PC-9 (cell line): ENCODE measurements at regions of chr12 and their contacts with region 1.

Region 1: GRCh38 chr12:56299853-56300643 is at the start of gene CS:
- DNase-seq: peak; percentile 93 to 97
- H3K4me3 ChIP-seq: peak within 1 kb of the TSS; percentile 88
- H3K27ac ChIP-seq: peak within 1 kb of the TSS; percentile 31
- H3K4me1 ChIP-seq: peaks cover 33% of the 10 kb centered on the region
- H3K27me3 ChIP-seq: no peaks in the 10 kb centered on the region
- CTCF ChIP-seq: no peak
- total RNA-seq, gene CS: 203 and 205 TPM in 2 replicates

Region 2: GRCh38 chr12:55862286-55862685 is 437.8 kb before region 1 on chr12:
- CTCF ChIA-PET with region 1: no interaction called
- POLR2A ChIA-PET with region 1: no interaction called
- intact Hi-C with region 1: no loop called
- DNase-seq: no peak
- H3K4me3 ChIP-seq: no peak overlapping the region
- H3K27ac ChIP-seq: no peak overlapping the region
- H3K4me1 ChIP-seq: no peaks in the 10 kb centered on the region
- H3K27me3 ChIP-seq: no peaks in the 10 kb centered on the region
- CTCF ChIP-seq: no peak

Region 3: DNA sequence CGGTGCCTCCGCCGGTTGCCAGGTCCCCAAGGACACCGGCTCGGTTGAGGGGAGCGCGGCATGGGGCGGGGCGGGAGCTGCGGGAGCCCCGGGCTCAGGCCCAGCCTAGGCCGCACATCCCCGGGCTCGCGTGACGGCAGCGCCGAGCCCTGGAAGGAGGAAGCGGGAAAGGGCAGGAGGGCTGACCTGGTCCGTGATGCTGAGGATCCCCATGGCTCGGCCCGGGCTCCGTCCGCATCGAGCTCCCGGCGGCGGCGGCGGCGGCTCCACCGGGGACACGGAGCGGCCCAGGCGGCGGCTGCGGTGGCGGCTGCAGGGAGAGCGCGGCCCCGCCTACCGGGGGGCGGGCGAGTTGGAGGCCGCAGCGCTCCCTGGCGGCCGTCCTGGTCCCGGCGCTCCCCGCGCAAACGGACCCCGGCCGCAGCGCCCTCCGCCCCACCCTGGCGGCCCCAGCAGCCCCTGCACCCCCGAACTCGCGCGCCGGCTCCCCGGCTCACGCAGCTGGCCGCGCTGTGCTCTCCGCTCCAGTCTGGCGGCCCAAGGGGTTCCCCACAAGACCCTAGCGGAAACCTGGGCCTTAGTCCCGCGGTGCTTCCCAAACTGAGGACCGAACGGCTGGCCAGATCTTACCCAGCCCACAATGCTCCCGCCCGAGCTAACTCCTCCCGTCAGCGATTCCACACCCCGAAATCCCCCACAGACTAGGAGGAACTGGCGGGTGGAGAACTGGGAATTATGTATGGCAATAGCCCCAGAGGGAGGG is 41.8 kb before region 1 on chr12 and contains the start of gene ANKRD52:
- CTCF ChIA-PET with region 1: no interaction called
- POLR2A ChIA-PET with region 1: no interaction called
- intact Hi-C with region 1: no loop called
- DNase-seq: peak; percentile 40 to 77
- H3K4me3 ChIP-seq: peak within 1 kb of the TSS; percentile 96
- H3K27ac ChIP-seq: no peak within 1 kb of the TSS
- H3K4me1 ChIP-seq: peaks cover 31% of the 10 kb centered on the region
- H3K27me3 ChIP-seq: no peaks in the 10 kb centered on the region
- CTCF ChIP-seq: peak; percentile 61
- total RNA-seq, gene ANKRD52: 59.4 and 62.8 TPM in 2 replicates

Region 4: GRCh38 chr12:56286044-56286830 is 13.8 kb before region 1 on chr12:
- CTCF ChIA-PET with region 1: interaction called, 3 read pairs
- POLR2A ChIA-PET with region 1: no interaction called
- intact Hi-C with region 1: loop called (anchors 1 kb)
- DNase-seq: no peak
- H3K4me3 ChIP-seq: no peak overlapping the region
- H3K27ac ChIP-seq: no peak overlapping the region
- H3K4me1 ChIP-seq: peaks cover 12% of the 10 kb centered on the region
- H3K27me3 ChIP-seq: no peaks in the 10 kb centered on the region
- CTCF ChIP-seq: no peak

Region 5: GRCh38 chr12:56315622-56316473 is 15.8 kb after region 1 on chr12 and contains the start of gene CNPY2:
- CTCF ChIA-PET with region 1: no interaction called
- POLR2A ChIA-PET with region 1: interaction called, 7 read pairs
- intact Hi-C with region 1: loop called (anchors 2 kb)
- DNase-seq: peak; percentile 95
- H3K4me3 ChIP-seq: peak within 1 kb of the TSS; percentile 83
- H3K27ac ChIP-seq: peak within 1 kb of the TSS; percentile 51
- H3K4me1 ChIP-seq: peaks cover 18% of the 10 kb centered on the region
- H3K27me3 ChIP-seq: no peaks in the 10 kb centered on the region
- CTCF ChIP-seq: no peak; the same call in 1 of the 2 replicates
- total RNA-seq, gene CNPY2: 78.2 and 82.1 TPM in 2 replicates

Region 6: DNA sequence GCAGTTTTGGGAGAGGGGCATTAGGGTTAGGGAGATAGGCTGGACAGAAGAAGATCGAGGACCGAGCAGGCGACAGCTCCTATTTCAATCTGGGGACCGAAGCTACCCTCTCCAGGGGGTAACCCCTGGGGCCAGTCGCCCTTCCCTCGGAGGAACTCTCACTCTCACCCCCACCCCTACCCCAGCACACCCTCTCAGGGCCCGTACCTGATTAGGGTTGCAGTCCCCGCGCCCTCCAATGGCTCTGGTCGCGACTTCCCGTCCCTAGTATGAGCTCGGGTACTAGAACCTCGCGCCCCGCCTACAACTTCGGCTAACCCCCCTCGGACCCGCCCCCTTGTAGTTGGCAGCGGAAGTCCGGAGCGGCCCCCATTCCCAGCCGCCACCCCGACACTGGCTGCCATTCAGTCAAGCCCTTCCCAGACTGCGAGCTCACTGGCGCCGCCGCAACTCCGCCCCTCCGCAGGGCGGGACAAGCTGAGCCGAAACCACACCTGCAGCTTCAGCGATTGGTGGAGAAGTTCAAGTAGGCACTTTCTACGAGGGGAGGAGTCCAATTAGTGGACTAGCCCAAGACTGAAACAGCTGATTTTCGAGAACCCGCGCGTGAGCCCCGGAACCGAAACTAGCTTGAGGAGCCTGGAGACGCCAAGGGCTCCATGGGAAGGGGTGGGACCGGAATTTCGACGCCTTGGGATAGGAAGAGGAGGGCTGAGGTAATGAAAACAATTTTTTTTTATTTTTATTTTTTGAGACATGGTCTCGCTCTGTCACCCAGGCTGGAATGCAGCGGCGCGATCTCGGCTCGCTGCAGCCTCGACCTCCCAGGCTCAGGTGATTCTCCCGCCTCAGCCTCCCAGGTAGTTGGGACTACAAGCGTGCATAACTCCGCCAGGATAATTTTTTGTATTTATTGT is 60.1 kb after region 1 on chr12 and contains the start of gene STAT2:
- CTCF ChIA-PET with region 1: interaction called, 5 read pairs
- POLR2A ChIA-PET with region 1: interaction called, 24 read pairs
- intact Hi-C with region 1: no loop called
- DNase-seq: peak; percentile 99
- H3K4me3 ChIP-seq: peak within 1 kb of the TSS; percentile 79
- H3K27ac ChIP-seq: peak within 1 kb of the TSS; percentile 85
- H3K4me1 ChIP-seq: peaks cover 17% of the 10 kb centered on the region
- H3K27me3 ChIP-seq: no peaks in the 10 kb centered on the region
- CTCF ChIP-seq: no peak
- total RNA-seq, gene STAT2: 76.6 and 80.8 TPM in 2 replicates

Region 7: GRCh38 chr12:56565510-56566101 is 265.6 kb after region 1 on chr12:
- CTCF ChIA-PET with region 1: no interaction called
- POLR2A ChIA-PET with region 1: no interaction called
- intact Hi-C with region 1: no loop called
- DNase-seq: no peak
- H3K4me3 ChIP-seq: no peak overlapping the region
- H3K27ac ChIP-seq: no peak overlapping the region
- H3K4me1 ChIP-seq: peaks cover 21% of the 10 kb centered on the region
- H3K27me3 ChIP-seq: no peaks in the 10 kb centered on the region
- CTCF ChIP-seq: no peak